ENCODE measurements at regions of chr7 and their contacts with region 1.

Region 1: DNA sequence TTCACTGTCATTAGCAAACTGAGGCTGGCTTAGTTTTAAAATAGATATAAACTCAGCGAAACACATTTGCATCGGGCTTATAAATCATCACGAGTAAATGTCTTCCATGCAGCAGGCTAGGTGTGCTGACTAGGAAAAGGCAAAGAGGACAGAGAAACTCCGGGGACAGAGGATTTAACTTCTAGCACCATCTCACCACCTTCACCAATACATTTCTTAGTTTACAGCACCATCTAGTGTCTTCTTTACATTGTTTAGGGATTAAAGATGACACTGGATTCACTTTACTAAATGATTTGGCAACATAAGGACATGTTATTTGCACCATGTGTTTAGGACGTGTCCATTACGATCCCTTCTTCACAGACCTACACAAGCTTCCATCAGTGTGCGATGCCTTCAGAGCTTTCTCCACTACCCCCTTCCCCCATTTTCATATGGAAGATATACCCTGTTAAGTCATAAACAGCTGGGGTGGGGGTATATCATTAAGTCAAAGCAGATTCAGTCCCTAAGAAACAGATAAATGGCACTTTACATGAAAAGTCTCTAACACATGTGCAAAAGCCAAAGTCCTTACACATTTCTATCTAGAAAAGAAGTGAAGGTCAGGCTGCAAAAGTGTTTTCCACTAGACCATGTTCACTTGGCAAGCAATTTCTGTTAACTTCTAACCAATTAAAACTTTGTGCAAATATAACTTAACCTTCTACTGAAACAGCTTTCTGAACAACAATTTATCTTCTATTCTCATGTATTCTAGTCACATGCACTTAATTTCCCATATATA is 103.3 kb downstream of the GRB10 start:
- DNase-seq: peak in 1 of 2 donors; percentile 75
- ATAC-seq: peak; percentile 72 to 82 (median 76)
- H3K4me3 ChIP-seq: no peak overlapping the region
- H3K4me3 Mint-ChIP-seq: no peak overlapping the region
- H3K27ac ChIP-seq: no peak overlapping the region
- H3K27ac Mint-ChIP-seq: no peak overlapping the region
- H3K4me1 ChIP-seq: no peaks in the 10 kb centered on the region
- H3K4me1 Mint-ChIP-seq: no peaks in the 10 kb centered on the region
- H3K27me3 ChIP-seq: no peaks in the 10 kb centered on the region
- H3K27me3 Mint-ChIP-seq: peaks cover 7 to 40% of the 10 kb centered on the region in 2 donors
- CTCF ChIP-seq: peak; percentile 74

Region 2: DNA sequence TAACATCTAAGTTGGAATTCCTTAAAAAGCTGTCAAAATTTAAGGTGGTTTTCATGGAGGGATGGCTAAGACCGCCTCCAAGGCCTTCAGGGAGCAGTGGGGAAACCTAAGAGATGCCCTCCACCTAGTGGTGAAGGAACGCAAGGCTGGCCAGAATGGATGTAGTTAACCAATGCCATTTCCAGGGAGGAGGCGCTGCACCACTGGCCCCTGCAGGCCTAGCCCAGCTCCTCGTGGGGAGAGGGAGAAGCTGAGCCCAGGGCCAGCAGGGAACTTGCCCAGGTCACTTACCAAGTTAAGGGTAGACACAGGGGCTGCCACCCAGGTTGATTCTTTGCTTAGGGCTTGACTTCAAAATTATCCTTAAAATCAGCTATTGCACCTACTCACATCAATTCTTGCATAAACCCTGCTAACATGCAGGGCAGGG is 261.3 kb before region 1 on chr7:
- intact Hi-C with region 1: loop called (anchors 1 kb)
- DNase-seq: peak; percentile 46 to 86
- ATAC-seq: peak; percentile 80 to 99 (median 96)
- H3K4me3 ChIP-seq: no peak overlapping the region
- H3K4me3 Mint-ChIP-seq: no peak overlapping the region
- H3K27ac ChIP-seq: no peak overlapping the region
- H3K27ac Mint-ChIP-seq: no peak overlapping the region
- H3K4me1 ChIP-seq: peaks cover 24% of the 10 kb centered on the region
- H3K4me1 Mint-ChIP-seq: peaks cover 6 to 7% of the 10 kb centered on the region in 2 donors
- H3K27me3 ChIP-seq: no peaks in the 10 kb centered on the region
- H3K27me3 Mint-ChIP-seq: no peaks in the 10 kb centered on the region
- CTCF ChIP-seq: peak; percentile 78

Region 3: GRCh38 chr7:50467817-50468610 is 211.4 kb before region 1 on chr7:
- intact Hi-C with region 1: loop called (anchors 1 kb)
- DNase-seq: peak; percentile 66 to 89
- ATAC-seq: peak; percentile 87 to 98 (median 97)
- H3K4me3 ChIP-seq: no peak overlapping the region
- H3K4me3 Mint-ChIP-seq: no peak overlapping the region
- H3K27ac ChIP-seq: no peak overlapping the region
- H3K27ac Mint-ChIP-seq: peak overlapping the region in 1 of 2 donors; percentile 42
- H3K4me1 ChIP-seq: peaks cover 9% of the 10 kb centered on the region
- H3K4me1 Mint-ChIP-seq: peaks cover 0 to 11% of the 10 kb centered on the region in 2 donors
- H3K27me3 ChIP-seq: no peaks in the 10 kb centered on the region
- H3K27me3 Mint-ChIP-seq: peaks cover 10 to 12% of the 10 kb centered on the region in 2 donors
- CTCF ChIP-seq: peak; percentile 85

Region 4: GRCh38 chr7:50614721-50615518 is 64.5 kb before region 1 on chr7:
- intact Hi-C with region 1: loop called (anchors 2 kb)
- DNase-seq: peak in 1 of 2 donors; percentile 47
- ATAC-seq: peak in 2 of 3 donors; percentile 41 to 50
- H3K4me3 ChIP-seq: no peak overlapping the region
- H3K4me3 Mint-ChIP-seq: no peak overlapping the region
- H3K27ac ChIP-seq: no peak overlapping the region
- H3K27ac Mint-ChIP-seq: peak overlapping the region in 1 of 2 donors; percentile 70
- H3K4me1 ChIP-seq: peaks cover 24% of the 10 kb centered on the region
- H3K4me1 Mint-ChIP-seq: peaks cover 41 to 46% of the 10 kb centered on the region in 2 donors
- H3K27me3 ChIP-seq: no peaks in the 10 kb centered on the region
- H3K27me3 Mint-ChIP-seq: peaks cover 3 to 5% of the 10 kb centered on the region in 2 donors
- CTCF ChIP-seq: peak; percentile 20

Measured in natural killer cell (primary cell).